ENCODE measurements at regions of chr12 and their contacts with region 1.

Region 1: GRCh38 chr12:90102957-90103652 is 394.5 kb upstream of the ATP2B1 start:
- DNase-seq: peak in 1 of 3 donors; percentile 50
- ATAC-seq: peak; percentile 71
- H3K4me3 ChIP-seq: no peak overlapping the region
- H3K4me1 ChIP-seq: no peaks in the 10 kb centered on the region
- CTCF ChIP-seq: peak; percentile 12

Region 2: DNA sequence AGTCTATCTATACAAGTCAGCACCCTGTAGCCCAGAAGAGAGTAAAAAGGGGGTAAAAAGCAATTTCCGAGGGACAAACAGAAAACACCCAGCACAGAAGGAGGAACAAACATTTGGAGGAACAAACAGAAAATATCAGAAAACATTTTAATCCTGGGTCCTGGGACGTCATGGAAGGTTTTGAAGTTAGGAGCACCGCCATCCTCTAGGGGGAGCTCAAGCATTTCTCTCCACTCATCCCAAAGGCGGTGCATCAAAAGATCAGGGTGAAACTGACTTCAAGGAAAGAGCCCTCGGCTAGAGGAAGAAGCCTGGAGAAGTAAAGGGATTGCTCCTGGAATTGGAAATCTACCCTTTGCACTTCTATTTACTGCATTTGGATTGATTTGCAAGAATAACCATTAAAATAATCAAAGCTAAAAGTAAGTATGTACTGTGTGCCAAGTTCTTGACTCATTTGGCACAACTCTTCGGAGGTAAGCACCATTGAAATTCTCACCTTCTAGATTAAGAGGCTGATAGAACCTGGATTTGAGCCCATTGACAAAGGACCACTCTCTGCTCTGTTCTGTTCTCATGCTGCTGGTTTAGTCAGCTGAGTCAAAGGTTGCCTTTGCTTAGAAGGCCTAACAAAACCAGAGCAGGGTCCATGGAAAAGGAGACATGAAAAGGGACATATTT is 560.1 kb before region 1 on chr12:
- intact Hi-C with region 1: loop called in 1 of 2 experiments (anchors 5 kb)
- DNase-seq: peak in 2 of 3 donors; percentile 48 to 91
- ATAC-seq: peak; percentile 92
- H3K4me3 ChIP-seq: no peak overlapping the region
- H3K4me1 ChIP-seq: peaks cover 8% of the 10 kb centered on the region
- CTCF ChIP-seq: peak; percentile 76

Region 3: GRCh38 chr12:89690925-89691324 is 412.2 kb before region 1 on chr12:
- intact Hi-C with region 1: no loop called
- DNase-seq: no peak
- ATAC-seq: no peak
- H3K4me3 ChIP-seq: no peak overlapping the region
- H3K4me1 ChIP-seq: peaks cover 13% of the 10 kb centered on the region
- CTCF ChIP-seq: no peak

Region 4: DNA sequence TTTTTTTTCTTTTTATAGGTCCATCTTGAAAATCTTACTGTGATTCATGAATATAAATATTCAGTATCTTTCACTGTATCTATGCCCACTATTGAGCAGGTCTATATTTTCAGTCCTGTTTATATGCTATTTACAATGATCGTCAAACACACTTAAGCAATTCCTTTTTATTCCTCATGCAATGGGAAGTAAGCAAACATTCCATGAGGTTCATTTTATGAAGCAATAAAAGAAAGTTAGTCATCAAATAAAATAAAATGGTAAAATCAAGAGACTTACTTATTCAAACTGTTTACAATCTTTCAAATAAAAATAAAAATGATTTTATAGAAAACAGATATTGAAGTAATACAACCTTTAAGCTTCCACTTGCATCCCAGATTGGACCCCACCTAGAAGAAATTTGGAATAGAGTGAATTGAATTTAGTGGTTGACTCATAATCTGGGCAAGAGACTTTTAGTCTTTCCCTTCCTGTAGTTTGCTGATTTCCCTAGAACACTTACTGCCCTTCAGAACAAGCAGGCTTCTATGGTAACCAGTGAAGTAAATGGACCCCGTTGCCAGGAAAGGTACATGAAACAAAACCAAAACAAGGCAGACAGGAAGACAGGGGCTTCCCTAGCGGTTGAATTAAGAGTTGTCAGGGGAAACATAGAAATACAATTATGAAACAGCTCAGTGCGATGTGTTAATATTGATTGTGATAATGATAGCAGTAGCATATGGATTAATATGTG is 153.5 kb before region 1 on chr12:
- intact Hi-C with region 1: no loop called
- DNase-seq: peak in 1 of 3 donors; percentile 48
- ATAC-seq: peak; percentile 74
- H3K4me3 ChIP-seq: no peak overlapping the region
- H3K4me1 ChIP-seq: peaks cover 57% of the 10 kb centered on the region
- CTCF ChIP-seq: no peak

Region 5: DNA sequence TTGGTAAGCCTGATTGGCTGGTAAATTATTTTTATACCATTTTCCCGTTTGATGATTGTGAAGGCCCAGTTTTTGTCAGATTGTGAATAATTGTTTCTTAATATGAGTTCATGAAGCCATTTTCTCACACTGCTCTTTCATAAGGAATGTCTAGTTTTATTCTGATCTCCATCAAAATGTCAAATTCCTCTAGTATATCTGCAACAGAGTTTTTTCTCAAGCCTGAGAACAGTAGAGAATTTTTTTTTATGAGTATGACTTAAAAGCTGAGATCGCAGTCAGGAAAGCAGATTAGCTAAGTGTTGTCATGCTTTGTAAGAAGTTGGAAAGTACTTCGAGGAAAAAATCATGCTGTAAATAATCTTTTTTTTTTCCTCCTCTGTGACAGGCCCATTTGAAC is 90.4 kb after region 1 on chr12:
- intact Hi-C with region 1: no loop called
- DNase-seq: no peak
- ATAC-seq: no peak
- H3K4me3 ChIP-seq: no peak overlapping the region
- H3K4me1 ChIP-seq: no peaks in the 10 kb centered on the region
- CTCF ChIP-seq: no peak

Measured in mucosa of descending colon (tissue), 3 donors.